Panc1 (cell line): ENCODE measurements at regions of chr10 and their contacts with region 1.

Region 1: DNA sequence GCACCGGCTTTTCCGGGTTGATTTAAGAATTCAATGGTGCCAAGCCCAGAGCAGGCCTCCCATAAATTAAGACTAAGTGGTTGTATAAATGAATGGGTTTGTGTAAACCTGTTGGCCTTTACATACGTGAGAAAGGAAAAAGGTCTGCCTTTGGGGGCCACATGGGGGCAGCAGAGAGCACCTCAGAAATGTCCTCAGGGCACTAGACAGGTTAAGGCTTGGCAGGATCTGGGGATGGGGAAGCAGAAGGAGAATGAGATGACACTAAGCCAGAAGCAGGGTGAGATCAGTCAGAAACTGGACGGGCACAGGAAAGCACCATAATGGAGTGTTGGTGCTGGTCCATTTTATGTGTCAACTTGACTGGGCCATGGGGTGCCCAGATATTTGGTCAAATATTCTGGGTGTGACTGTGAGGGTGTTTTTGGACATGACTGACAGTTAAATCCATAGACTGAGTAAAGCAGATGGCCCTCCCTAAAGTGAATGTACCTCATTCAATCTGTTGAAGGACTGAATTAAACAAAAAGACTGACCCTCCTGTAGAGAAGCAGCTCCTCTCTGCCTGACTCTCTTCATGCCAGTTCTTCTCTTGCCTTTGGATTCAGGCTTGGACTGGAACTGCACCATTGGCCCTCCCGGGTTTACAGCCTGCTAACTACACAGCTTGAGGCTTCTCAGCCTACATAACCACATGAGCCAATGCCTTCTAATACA is 58.9 kb downstream of the FRMPD2 start:
- DNase-seq: peak; percentile 10
- ATAC-seq: peak; percentile 86
- H3K4me3 ChIP-seq: no peak overlapping the region
- H3K27ac ChIP-seq: no peak overlapping the region
- H3K4me1 ChIP-seq: no peaks in the 10 kb centered on the region
- H3K27me3 ChIP-seq: peaks cover 4% of the 10 kb centered on the region
- CTCF ChIP-seq: peak; percentile 93

Region 2: GRCh38 chr10:48197236-48197899 is 18.3 kb before region 1 on chr10:
- CTCF ChIA-PET with region 1: no interaction called
- POLR2A ChIA-PET with region 1: no interaction called
- in situ Hi-C with region 1: no loop called
- intact Hi-C with region 1: loop called (anchors 2 kb)
- DNase-seq: no peak
- ATAC-seq: no peak
- H3K4me3 ChIP-seq: no peak overlapping the region
- H3K27ac ChIP-seq: no peak overlapping the region
- H3K4me1 ChIP-seq: no peaks in the 10 kb centered on the region
- H3K27me3 ChIP-seq: peaks cover 5% of the 10 kb centered on the region; the same call in 1 of the 2 replicates
- CTCF ChIP-seq: no peak

Region 3: DNA sequence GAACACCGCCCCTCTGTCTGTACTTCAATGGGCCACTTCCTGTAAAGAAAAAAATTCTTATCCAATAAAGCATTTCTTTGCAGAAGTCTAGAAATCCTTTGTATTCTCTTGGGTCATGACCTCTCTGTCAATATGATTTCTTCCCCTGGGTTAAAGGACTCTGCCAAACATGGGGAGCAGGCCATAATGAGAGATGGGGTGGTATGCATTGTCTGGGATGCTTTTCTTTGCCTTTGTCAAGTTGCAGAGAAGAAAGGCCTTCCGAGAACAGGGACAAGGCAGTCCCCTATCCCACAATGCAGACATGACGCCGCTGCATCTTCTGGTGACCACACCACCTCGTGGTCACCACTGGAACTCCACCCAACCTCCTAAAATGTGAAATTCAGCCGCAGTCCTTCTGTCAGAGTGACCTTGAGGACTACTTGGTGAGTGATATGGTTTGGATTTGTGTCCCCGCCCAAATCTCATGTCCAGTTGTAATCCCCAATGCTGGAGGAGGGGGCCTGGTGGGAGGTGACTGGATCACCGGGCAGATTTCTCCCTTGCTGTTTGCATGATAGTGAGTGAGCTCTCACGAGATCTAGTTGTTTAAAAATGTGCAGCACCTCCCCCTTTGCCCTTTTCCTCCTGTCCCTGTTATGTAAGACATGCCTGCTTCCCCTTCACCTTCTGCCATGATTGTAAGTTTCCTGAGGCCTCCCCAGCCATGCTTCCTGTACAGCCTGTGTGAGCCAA is 74.0 kb after region 1 on chr10:
- CTCF ChIA-PET with region 1: no interaction called
- POLR2A ChIA-PET with region 1: no interaction called
- in situ Hi-C with region 1: no loop called
- intact Hi-C with region 1: loop called (anchors 10 kb)
- DNase-seq: peak; percentile 60
- ATAC-seq: peak; percentile 79
- H3K4me3 ChIP-seq: no peak overlapping the region
- H3K27ac ChIP-seq: no peak overlapping the region
- H3K4me1 ChIP-seq: no peaks in the 10 kb centered on the region
- H3K27me3 ChIP-seq: no peaks in the 10 kb centered on the region; the same call in 1 of the 2 replicates
- CTCF ChIP-seq: peak; percentile 94

Region 4: DNA sequence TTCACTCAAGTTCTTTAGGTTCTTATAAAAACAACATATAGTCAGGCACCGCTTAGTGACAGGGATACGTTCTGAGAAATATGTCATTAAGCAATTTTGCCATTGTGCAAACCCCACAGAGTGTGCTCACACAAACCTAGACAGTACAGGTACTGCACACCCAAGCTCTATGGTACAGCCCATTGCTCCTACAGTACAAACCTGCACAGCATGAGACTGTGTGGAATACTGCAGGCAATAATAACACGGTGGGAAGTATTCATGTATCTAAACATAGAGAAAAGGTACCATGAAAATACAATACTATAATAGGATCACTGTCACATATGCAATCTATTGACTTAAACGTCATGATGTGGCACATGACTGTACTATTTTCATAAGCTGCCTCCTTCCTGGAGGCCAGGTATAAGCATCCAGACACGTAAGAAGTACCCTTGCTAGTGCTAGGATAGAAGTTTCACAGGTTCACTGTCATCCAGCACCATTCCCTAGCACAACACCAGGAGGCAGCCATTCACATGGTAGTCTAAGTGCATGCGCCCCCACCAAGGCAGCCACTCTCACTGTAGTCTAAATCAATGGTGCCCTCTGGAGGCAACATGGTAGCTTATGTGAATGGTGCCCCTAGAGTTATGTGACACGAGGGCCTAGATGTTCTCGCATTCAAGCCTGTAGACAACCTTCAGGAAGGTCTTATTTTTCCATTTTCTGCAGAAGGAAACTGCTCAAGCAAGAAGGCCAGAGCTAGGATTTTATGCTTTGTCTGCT is 290.7 kb after region 1 on chr10:
- CTCF ChIA-PET with region 1: no interaction called
- POLR2A ChIA-PET with region 1: no interaction called
- in situ Hi-C with region 1: no loop called
- intact Hi-C with region 1: no loop called
- DNase-seq: no peak
- ATAC-seq: peak; percentile 73
- H3K4me3 ChIP-seq: no peak overlapping the region
- H3K27ac ChIP-seq: no peak overlapping the region
- H3K4me1 ChIP-seq: no peaks in the 10 kb centered on the region
- H3K27me3 ChIP-seq: no peaks in the 10 kb centered on the region
- CTCF ChIP-seq: peak; percentile 57